AG04449 (cell line): ENCODE measurements at regions of chr12 and their contacts with region 1.

Region 1: GRCh38 chr12:51549637-51550036 is 41.4 kb upstream of the SCN8A start:
- DNase-seq: peak; percentile 7
- H3K4me3 ChIP-seq: no peak overlapping the region
- CTCF ChIP-seq: no peak

Region 2: DNA sequence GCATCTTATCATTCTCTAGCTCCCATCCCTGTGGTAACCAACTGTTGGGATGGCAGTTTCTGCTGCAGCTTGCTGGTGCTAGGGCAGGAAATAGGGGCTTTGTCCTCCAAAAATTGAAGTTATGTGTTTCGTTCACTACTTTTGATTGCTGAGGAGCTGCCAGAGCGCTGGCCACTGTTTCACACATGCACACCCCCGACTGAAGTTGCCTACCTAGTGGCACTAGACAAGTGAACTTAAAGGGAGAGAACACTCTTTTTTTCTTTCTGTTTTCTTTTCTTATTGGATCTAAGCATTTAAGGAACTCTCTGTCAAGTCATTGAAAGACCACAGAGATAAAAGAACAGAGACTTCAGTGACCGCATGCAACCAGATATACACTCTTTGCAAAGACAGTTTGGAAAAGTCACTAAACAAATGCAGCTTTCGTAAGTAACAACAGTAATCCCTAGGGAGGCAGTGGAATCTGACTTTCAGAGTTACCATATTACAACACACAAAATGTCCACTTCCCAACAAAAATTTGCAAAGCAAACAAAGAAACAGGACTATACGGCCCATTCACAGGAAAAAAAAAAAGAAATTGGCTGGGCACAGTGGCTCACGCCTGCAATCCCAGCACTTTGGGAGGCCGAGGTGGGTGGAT is 388.7 kb before region 1 on chr12:
- CTCF ChIA-PET with region 1: no interaction called
- POLR2A ChIA-PET with region 1: no interaction called
- DNase-seq: no peak
- H3K4me3 ChIP-seq: no peak overlapping the region
- CTCF ChIP-seq: no peak

Region 3: GRCh38 chr12:51521554-51522276 is 27.9 kb before region 1 on chr12:
- CTCF ChIA-PET with region 1: no interaction called
- POLR2A ChIA-PET with region 1: no interaction called
- DNase-seq: no peak
- H3K4me3 ChIP-seq: no peak overlapping the region
- CTCF ChIP-seq: peak; percentile 22

Region 4: DNA sequence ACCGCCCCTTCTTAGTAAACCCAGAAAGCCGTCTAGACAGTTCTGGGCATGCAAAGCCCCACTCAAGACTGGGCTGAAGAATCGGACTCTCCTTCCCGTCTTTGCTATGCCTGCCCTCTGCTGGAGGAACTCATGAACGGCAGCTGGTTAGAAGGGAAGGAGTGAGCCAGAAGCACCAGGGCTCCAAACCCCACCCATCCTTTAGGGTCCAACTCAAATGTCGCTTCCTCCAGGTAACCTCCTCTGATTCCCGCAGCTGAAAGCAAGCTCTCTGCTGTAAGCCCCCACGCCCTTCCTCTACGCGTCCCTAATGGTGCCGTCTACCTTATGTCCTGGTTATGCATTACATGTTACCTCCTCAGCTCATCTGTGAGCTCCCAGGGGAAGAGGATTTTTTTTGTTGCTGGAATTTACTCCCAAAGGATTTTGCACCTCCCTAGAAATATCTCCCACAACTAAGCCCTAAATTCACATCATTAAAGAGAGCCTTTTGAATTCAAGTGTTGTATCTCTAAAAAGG is 17.6 kb before region 1 on chr12:
- CTCF ChIA-PET with region 1: interaction called, 36 read pairs
- POLR2A ChIA-PET with region 1: no interaction called
- DNase-seq: peak; percentile 21
- H3K4me3 ChIP-seq: no peak overlapping the region
- CTCF ChIP-seq: peak; percentile 92

Region 5: DNA sequence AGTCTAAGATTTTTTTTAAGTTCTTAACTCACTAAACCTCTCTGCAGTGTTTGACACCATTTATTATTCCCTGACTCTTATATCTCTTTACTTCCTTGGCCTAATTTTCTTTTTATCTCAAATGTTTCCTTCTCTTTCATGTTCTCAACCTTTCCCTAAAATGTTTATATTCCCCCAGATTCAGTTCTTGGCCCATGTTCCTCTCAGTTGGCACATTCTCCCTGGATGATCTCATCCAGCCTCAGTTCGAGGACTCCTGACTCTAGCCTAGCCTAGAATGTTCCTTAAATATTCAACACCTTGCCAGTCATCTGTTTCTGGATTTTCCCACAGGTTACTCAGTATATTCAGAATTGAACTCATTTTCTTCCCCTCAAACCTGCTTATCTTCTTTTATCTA is 122.7 kb after region 1 on chr12:
- CTCF ChIA-PET with region 1: no interaction called
- POLR2A ChIA-PET with region 1: no interaction called
- DNase-seq: no peak
- H3K4me3 ChIP-seq: no peak overlapping the region
- CTCF ChIP-seq: no peak